ENCODE measurements at regions of chr12 and their contacts with region 1.

Region 1: DNA sequence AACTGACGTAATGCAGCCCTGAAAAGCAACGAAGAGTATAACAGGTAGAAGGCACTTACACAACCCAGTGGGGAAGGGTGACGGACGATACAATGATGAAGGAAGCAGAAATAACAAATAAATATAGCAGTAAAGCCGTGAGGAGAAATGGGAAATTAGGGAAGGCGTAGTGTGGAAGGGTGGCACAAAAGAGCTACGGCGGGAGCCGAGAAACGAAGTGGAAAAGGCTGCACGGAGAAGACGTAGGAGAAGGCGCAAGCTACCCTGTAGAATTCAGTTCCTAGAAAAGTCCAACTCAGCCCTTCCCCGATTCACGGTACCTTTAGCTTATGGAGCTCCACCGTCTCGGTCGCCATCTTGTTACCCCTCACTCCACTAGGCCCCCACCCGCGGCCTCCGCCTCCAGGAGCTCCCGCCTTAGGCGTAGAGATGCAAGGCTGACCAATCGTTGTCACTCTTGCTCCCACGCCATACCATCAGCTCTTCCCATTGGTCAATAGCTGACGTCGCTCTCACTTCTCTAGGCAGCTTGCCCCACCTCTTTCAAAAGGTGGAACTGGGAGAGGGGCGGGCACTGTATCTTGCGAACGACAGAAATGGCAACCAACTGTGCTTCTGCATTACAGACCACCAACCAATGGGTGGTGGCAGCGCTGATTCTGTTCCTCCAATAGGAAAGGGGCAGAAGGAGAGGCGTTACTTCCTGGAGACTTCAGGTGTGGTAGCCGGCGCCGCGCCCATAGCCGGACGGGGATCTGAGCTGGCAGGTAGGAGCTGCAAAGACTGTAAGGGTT is at the starts of genes ORMDL2 and SARNP:
- DNase-seq: peak; percentile 97
- total RNA-seq, gene ORMDL2: 23.0 TPM
- total RNA-seq, gene SARNP: 56.2 TPM

Region 2: DNA sequence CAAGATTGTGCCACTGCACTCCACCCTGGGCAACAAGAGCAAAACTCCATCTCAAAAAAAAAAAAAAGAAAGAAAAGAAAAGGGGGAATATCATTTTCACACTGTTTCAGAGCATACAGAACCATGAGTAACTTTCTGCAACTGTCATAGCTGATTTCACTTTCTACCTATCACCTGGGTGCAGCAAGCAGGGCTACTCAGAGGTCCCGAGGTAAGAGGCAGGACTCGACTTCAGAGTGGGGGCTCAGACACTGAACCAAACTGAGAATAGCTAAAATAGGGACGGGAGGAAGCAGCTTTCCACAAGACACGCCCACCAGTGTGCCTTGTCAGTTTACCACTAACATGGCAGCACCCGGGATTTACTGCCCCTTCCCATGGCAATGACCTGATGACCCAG is 151.0 kb before region 1 on chr12:
- intact Hi-C with region 1: no loop called
- DNase-seq: peak; percentile 12

Region 3: DNA sequence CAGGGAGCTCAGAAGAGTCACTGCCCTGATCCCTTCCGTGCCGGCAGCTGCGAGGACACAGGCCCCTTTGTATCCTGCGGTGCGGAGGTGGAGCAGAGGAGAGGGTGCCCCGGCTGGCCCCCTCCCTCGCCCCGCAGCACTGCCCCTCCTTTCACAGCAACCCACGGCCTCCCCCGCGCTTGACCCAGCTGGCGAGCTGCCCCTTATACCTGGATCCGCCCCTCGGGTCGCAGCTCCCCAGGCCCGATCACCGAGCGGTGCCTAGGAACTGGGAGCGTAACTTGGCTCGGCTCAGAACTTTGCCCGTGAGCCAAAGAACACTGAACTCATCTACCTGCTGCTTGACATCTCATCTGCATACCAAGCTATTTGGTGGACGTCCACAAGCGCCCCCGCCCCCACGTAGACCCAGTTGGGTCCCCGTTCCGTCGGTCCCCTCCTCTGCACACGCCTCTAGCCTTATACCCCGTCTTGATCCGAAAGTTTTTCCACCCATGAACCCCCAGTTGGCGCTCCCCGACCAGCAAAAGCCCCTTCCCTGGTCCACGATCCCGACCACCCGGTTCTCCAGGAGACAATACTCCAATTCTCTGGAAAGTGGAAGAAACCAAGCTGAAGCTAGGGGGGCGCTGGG is 12.5 kb after region 1 on chr12:
- intact Hi-C with region 1: loop called (anchors 1 kb)
- DNase-seq: no peak

Measured in cardiac septum (tissue), 1 donor.